Activated CD8-positive, alpha-beta T cell treated with anti-CD3 and anti-CD28 coated beads, Interleukin-2, amount 10 ng/mL, durations not matched to agents 7 days and 5 days (primary cell): ENCODE measurements at regions of chr6 and their contacts with region 1.

Region 1: DNA sequence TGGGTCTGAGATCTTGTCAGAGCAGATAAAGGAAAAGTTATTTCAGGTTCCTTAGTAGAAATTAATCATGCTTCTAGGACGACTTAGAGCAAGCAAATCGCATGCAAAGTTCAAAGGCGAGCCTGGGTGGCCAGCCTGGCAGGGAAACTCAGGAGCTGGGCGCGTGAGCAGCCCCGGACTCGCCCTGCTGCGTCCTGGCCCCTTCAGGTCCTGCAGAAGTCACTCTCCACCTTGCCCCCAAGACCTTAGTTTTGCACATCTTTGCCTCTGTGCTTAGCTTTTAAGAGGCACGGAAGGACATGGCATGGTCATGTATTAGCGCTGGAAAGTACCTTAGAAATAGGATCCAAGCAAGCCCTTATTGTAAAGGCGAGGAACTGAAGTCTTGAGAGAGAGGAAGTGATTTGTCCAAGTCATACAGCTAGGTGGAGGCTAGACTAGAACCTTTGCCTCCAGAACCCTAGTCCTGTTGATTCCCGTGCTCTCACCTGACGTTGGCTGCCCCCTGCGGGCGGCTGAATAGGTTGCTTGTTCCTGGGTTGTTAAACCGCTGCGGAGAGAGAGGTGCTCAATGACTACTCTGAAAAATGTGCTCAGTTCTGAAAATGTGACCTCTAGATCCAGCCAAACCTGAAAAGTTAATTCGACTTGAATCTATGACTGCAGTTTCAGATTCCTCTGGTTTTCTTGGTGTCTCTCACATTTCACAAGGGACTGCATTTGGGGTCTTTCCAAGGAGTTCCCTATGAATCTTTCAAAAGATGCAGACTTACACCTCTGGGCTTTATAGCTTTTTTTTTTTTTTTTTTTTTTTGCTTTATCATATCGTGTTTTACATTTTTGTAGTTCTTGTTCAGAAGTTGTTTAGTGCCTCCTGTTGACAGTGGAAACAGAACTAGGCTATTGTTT is 2.7 kb downstream of the MYB start:
- DNase-seq: peak; percentile 89
- ATAC-seq: peak; percentile 47
- H3K4me3 Mint-ChIP-seq: peak overlapping the region; percentile 96
- H3K27ac Mint-ChIP-seq: peak overlapping the region; percentile 89
- H3K4me1 Mint-ChIP-seq: peaks cover 35% of the 10 kb centered on the region
- H3K27me3 Mint-ChIP-seq: no peaks in the 10 kb centered on the region

Region 2: DNA sequence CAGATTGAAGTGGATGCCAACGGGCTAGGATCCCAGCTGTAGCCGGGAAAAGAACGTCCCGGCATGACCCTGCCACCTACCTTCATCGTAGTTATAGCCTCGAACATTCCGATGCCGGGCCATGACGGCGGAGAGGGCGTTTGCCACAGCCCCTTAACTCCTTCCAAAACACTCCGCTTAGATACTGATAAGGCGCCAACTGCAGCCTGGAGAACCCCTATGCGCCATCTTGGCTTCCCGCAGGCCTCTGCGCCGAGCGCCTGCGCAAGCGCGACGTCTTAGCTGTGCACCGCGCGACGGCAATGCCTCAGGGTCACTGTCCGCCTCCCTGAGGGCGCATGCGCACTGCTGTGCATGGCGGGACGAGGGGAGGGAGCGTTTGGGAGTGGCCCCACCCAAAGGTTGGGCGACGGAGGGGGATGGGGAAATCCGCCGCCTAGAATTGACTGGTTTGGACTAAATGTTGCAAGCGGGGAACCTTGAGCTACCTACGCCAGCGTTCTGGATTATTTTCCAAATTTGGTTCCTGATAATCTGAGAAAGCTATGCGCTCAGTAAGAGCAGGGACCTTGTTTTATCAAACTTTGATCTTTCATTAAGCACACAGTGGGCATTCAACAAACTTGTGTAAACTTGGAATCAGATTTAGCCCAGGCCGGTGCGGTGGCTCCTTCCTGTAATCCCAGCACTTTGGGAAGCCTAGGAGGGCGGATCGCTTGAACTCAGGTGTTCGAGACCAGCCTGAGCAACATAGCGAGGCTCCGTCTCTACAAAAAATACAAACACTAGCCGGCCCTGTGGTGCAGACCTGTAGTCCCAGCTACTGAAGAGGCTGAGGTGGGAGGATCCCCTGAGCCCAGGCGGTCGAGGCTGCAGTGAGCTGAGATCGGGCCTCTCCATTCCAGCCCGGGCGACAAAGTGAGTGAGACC is 129.0 kb before region 1 on chr6 and contains the start of gene HBS1L:
- CTCF ChIA-PET with region 1: interaction called, 24 read pairs
- POLR2A ChIA-PET with region 1: interaction called, 35 read pairs
- DNase-seq: peak; percentile 98
- ATAC-seq: peak; percentile 99
- H3K4me3 Mint-ChIP-seq: peak within 1 kb of the TSS; percentile 97
- H3K27ac Mint-ChIP-seq: peak within 1 kb of the TSS; percentile 98
- H3K4me1 Mint-ChIP-seq: peaks cover 31% of the 10 kb centered on the region
- H3K27me3 Mint-ChIP-seq: no peaks in the 10 kb centered on the region
- total RNA-seq, gene HBS1L: 72.8 to 77.5 TPM

Region 3: GRCh38 chr6:135094403-135094848 is 89.4 kb before region 1 on chr6:
- CTCF ChIA-PET with region 1: interaction called, 13 read pairs
- POLR2A ChIA-PET with region 1: interaction called, 13 read pairs
- DNase-seq: peak; percentile 63
- ATAC-seq: peak; percentile 87
- H3K4me3 Mint-ChIP-seq: peak overlapping the region; percentile 53
- H3K27ac Mint-ChIP-seq: peak overlapping the region; percentile 88
- H3K4me1 Mint-ChIP-seq: peaks cover 53% of the 10 kb centered on the region
- H3K27me3 Mint-ChIP-seq: no peaks in the 10 kb centered on the region

Region 4: GRCh38 chr6:135114355-135115145 is 69.2 kb before region 1 on chr6:
- CTCF ChIA-PET with region 1: interaction called, 4 read pairs
- POLR2A ChIA-PET with region 1: interaction called, 41 read pairs
- DNase-seq: peak; percentile 57
- ATAC-seq: peak; percentile 79
- H3K4me3 Mint-ChIP-seq: peak overlapping the region; percentile 19
- H3K27ac Mint-ChIP-seq: peak overlapping the region; percentile 81
- H3K4me1 Mint-ChIP-seq: peaks cover 71% of the 10 kb centered on the region
- H3K27me3 Mint-ChIP-seq: no peaks in the 10 kb centered on the region

Region 5: DNA sequence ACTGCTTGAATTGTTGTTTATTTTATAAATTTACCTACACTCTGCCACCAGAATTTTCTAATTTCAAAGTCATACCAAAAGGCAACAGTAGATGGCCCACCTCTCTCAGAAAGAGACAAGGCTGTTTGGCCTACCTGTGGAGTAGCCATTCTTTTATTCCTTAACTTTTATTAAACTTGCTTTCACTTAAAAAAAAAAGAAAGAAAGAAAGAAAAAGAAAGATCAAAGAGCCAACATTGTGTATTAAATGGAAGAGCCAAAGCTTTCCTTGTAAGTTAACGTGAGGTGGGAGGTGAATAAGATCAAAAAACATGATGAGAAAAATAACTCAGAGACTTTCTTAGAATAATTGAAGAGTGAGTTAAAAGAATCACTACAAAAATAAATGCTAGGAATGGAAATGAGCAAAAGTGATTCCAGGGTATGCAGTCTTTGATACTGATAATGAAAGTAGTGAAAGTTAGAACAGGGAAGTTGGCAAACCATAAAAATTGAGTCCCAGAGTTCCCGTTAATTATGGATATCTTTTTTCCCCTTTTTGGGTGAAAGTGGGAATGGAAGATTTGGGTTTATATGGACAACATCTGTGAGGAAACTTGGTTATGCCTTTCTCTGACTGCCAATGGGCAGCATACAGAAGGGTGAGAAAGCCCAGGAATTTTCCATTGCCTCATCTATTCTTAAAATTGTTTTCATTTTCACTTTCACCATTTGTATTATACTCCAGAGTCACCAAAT is 38.6 kb before region 1 on chr6:
- CTCF ChIA-PET with region 1: interaction called, 140 read pairs
- POLR2A ChIA-PET with region 1: interaction called, 91 read pairs
- DNase-seq: peak; percentile 49
- ATAC-seq: peak; percentile 76
- H3K4me3 Mint-ChIP-seq: peak overlapping the region; percentile 57
- H3K27ac Mint-ChIP-seq: peak overlapping the region; percentile 82
- H3K4me1 Mint-ChIP-seq: peaks cover 54% of the 10 kb centered on the region
- H3K27me3 Mint-ChIP-seq: no peaks in the 10 kb centered on the region

Region 6: GRCh38 chr6:135173242-135174134 is 10.3 kb before region 1 on chr6:
- CTCF ChIA-PET with region 1: interaction called, 165 read pairs
- POLR2A ChIA-PET with region 1: interaction called, 212 read pairs
- DNase-seq: no peak
- ATAC-seq: no peak
- H3K4me3 Mint-ChIP-seq: no peak overlapping the region
- H3K27ac Mint-ChIP-seq: no peak overlapping the region
- H3K4me1 Mint-ChIP-seq: peaks cover 20% of the 10 kb centered on the region
- H3K27me3 Mint-ChIP-seq: no peaks in the 10 kb centered on the region